ENCODE measurements at regions of chr1 and their contacts with region 1.

Region 1: DNA sequence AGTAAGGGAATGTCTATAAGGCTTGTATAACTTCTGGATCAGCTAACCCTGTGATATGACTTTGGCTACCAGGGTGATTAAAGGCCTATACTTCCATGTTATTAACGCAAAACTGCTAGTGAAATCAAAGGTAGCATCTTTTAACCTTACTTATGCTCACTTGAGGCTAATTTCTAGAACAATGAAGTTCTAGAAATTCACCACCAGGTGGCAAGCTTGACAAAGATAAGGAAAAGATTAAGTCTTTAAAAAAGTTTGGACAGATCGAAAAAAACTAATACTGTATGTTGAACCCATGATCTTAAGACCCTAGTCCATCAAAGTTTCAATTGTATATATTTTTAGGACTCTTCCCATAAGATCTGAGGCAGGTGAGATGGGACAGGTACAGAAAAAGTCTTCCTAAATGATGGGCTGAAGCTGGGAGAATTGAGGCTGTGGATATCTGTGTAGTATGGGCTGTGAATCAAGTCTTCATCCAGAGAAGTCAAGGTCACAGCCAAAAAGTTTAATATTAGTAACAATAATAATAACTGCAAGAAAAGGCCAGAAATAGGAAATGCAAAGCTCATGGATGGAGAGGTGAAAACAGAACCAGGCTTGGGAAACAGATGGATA is 18.8 kb downstream of the KYAT3 start:
- DNase-seq: no peak
- H3K27ac ChIP-seq: no peak overlapping the region
- CTCF ChIP-seq: peak; percentile 57

Region 2: GRCh38 chr1:88847643-88848042 is 126.0 kb before region 1 on chr1:
- CTCF ChIA-PET with region 1: no interaction called
- POLR2A ChIA-PET with region 1: no interaction called
- DNase-seq: no peak
- H3K27ac ChIP-seq: no peak overlapping the region
- CTCF ChIP-seq: no peak

Region 3: DNA sequence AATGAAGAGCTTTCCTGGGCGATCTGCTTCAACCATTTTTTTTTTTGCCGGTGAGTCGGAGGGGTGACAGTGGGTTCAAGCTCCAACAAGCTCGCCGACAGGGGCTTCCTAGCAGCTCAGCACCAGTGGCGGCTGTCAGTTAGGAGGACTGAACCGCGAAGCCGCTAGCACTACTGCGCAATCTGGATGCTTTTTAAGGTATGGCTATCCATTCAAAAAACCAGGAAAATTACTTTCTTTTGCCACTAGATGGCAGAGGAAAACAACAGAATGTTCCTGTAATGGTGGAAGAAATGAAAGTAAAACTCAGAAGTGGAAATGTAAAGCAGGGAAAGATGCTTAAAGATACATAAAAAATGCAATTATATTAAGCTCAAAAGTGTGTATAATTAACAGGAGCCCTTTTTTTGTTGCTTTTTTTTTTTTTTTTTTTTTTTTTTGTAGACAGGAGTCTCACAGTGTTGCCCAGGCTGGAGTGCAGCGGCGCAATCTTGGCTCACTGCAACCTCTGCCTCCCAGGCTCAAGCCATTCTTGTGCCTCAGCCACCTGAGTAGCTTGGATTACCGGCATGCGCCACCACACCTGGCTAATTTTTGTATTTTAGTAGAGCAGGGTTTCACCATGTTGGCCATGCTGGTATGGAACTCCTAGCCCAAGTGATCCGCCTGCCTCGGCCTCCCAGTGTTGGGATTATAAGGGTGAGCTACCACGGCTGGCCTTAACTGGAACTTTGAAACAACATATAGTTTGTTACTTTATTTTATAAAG is 10.3 kb after region 1 on chr1:
- CTCF ChIA-PET with region 1: interaction called, 10 read pairs
- POLR2A ChIA-PET with region 1: no interaction called
- DNase-seq: peak; percentile 51
- H3K27ac ChIP-seq: peak overlapping the region; percentile 64
- CTCF ChIP-seq: peak; percentile 67

Region 4: DNA sequence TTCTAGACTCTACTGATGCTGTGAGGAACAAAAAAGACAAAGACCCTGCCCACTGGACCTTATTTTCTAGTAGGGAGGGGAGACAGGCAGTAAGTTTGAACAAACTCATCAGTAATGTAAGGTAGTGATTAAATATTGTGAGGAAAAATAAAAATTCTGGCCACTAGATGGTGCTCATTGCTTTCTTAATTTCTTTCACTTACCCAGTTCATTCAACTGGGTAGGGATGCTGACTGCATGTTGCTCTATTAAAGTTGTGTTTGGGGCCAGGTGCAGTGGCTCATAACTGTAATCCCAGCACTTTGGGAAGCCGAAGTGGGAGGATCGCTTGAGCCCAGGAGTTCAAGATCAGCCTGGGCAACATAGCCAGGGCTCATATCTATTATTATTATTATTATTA is 25.1 kb after region 1 on chr1:
- CTCF ChIA-PET with region 1: interaction called, 10 read pairs
- POLR2A ChIA-PET with region 1: no interaction called
- DNase-seq: no peak
- H3K27ac ChIP-seq: no peak overlapping the region
- CTCF ChIP-seq: peak; percentile 37